HCT116 (cell line): ENCODE measurements at regions of chr11 and their contacts with region 1.

Region 1: DNA sequence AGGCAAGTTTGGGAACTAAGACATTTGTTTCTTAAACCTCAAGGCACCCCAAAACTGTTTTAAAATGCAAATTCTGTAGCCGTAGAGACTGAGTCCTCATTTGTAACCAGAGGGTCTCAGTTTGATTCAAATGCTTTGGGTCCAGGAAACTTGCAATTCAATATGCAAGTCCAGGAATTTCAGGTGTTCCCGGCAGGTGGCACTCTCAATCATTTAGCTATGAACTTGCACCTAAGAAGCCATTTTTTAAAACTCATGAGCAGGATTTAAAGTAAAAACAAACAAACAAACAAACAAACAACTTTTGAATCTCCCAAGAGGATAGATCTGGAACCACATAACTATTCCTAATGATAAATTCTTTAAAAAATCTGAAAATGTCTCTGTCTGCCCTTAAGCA is 8.7 kb upstream of the ABTB2 start:
- DNase-seq: peak; percentile 73
- ATAC-seq: peak; percentile 66
- H3K4me3 ChIP-seq: no peak overlapping the region
- H3K27ac ChIP-seq: no peak overlapping the region
- H3K4me1 ChIP-seq: peaks cover 5 to 7% of the 10 kb centered on the region in 2 experiments; a peak in 3 of 4 replicates
- H3K27me3 ChIP-seq: no peaks in the 10 kb centered on the region
- CTCF ChIP-seq: peak; percentile 70 to 89 (median 80)
- POLR2A ChIP-seq: no peak
- RAD21 ChIP-seq: peak; percentile 82

Region 2: DNA sequence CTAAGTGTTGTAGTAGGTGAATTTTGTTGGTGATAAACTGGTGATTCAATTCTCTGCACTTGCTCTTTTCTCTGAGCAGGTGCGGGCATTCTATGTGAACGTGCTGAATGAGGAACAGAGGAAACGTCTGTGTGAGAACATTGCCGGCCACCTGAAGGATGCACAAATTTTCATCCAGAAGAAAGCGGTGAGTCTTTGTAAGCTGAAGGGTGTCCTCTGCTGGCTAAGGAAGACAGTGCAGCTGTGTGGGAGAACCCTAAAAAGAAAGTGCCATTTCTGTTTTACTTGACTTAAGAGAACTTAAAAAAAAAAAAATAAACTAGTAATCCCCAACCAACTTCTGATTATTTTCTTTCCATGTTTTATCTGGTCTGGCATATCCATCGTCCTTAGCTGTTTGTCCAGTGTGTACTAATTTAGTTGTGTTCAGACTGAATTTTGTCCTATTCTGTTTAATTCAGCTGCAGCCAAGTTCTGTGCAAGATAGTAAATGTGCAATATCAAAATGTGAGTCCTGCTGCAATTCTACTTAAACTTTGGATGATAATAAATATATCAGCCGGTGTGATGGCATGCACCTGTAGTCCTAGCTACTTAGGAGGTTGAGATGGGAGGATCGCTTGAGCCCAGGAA is 101.8 kb after region 1 on chr11:
- CTCF ChIA-PET with region 1: interaction called, 37 read pairs
- POLR2A ChIA-PET with region 1: no interaction called
- RAD21 ChIA-PET with region 1: interaction called in 1 of 2 experiments, 6 read pairs
- intact Hi-C with region 1: loop called (anchors 1 kb)
- DNase-seq: peak; percentile 28
- ATAC-seq: peak; percentile 81
- H3K4me3 ChIP-seq: no peak overlapping the region
- H3K27ac ChIP-seq: no peak overlapping the region
- H3K4me1 ChIP-seq: no peaks in the 10 kb centered on the region
- H3K27me3 ChIP-seq: no peaks in the 10 kb centered on the region
- CTCF ChIP-seq: peak; percentile 78 to 87 (median 82)
- POLR2A ChIP-seq: no peak
- RAD21 ChIP-seq: peak; percentile 79

Region 3: DNA sequence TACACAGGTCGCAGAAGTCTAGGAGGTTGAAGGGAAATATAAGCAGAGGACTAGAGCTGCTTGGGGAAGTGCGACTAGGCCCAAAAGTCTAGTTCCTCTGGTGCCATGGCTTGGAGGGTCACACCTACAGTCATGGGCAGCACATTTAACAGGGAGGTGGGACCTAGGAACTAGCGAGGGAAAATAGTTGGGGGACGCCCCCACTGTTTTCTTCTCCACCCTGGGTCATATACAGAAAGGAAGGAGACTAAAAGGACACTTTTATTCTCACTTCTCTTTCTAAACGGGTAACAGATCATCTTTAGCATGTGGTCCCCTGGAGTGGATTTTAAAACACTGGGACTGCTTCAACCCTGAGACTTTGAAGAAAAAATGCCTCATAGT is 533.1 kb after region 1 on chr11:
- CTCF ChIA-PET with region 1: interaction called, 39 read pairs
- POLR2A ChIA-PET with region 1: no interaction called
- RAD21 ChIA-PET with region 1: interaction called in 1 of 2 experiments, 3 read pairs
- intact Hi-C with region 1: loop called (anchors 1 kb)
- DNase-seq: no peak
- ATAC-seq: peak; percentile 16; the same call in 1 of the 2 replicates
- H3K4me3 ChIP-seq: no peak overlapping the region
- H3K27ac ChIP-seq: no peak overlapping the region
- H3K4me1 ChIP-seq: peaks cover 3 to 5% of the 10 kb centered on the region in 2 experiments; a peak in 3 of 4 replicates
- H3K27me3 ChIP-seq: no peaks in the 10 kb centered on the region
- CTCF ChIP-seq: no peak
- POLR2A ChIP-seq: no peak
- RAD21 ChIP-seq: no peak

Region 4: DNA sequence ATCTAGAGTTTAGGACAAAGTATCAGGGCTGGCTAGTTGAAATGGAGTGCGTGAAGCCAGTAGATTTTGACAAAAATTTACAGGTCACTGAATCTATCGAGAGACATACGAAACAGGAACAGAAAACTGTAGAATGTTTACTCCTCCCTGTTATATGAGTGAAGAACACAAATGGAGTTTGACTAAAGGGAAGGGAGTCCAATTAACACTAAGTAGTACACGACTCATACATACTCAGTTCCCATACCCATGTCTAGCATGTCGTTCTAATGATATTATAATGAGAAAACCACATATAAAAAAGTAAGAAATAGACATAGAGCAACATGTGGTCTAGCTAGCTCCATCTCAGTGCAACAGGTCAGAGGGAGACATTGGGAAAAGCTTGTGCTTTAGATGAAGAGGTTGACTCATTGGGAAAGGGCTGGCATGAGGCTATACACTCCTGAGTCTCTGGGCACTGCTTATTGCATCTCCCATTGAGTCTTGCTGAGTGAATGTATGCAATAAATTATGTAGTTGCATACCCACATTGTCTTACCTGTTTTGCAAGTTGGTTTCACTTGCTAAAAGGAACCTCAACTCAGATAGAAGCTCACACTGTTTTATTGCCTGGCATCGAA is 815.9 kb after region 1 on chr11:
- CTCF ChIA-PET with region 1: no interaction called
- POLR2A ChIA-PET with region 1: no interaction called
- RAD21 ChIA-PET with region 1: no interaction called
- intact Hi-C with region 1: no loop called
- DNase-seq: no peak
- ATAC-seq: no peak
- H3K4me3 ChIP-seq: no peak overlapping the region
- H3K27ac ChIP-seq: no peak overlapping the region
- H3K4me1 ChIP-seq: peaks cover 0 to 8% of the 10 kb centered on the region in 2 experiments; a peak in 1 of 4 replicates
- H3K27me3 ChIP-seq: no peaks in the 10 kb centered on the region
- CTCF ChIP-seq: no peak
- POLR2A ChIP-seq: no peak
- RAD21 ChIP-seq: no peak

Region 5: GRCh38 chr11:35436581-35437250 is 1070.2 kb after region 1 on chr11:
- CTCF ChIA-PET with region 1: no interaction called
- POLR2A ChIA-PET with region 1: no interaction called
- RAD21 ChIA-PET with region 1: no interaction called
- intact Hi-C with region 1: no loop called
- DNase-seq: no peak
- ATAC-seq: no peak
- H3K4me3 ChIP-seq: no peak overlapping the region
- H3K27ac ChIP-seq: no peak overlapping the region
- H3K4me1 ChIP-seq: no peaks in the 10 kb centered on the region
- H3K27me3 ChIP-seq: peaks cover 70% of the 10 kb centered on the region
- CTCF ChIP-seq: no peak
- POLR2A ChIP-seq: no peak
- RAD21 ChIP-seq: no peak